A673 (cell line): ENCODE measurements at regions of chr14 and their contacts with region 1.

Region 1: GRCh38 chr14:68911594-68912227 is 67.4 kb downstream of the ACTN1 start:
- DNase-seq: peak; percentile 87
- H3K4me3 ChIP-seq: no peak overlapping the region
- H3K27ac ChIP-seq: no peak overlapping the region
- H3K4me1 ChIP-seq: no peaks in the 10 kb centered on the region
- H3K27me3 ChIP-seq: no peaks in the 10 kb centered on the region
- CTCF ChIP-seq: peak; percentile 99

Region 2: DNA sequence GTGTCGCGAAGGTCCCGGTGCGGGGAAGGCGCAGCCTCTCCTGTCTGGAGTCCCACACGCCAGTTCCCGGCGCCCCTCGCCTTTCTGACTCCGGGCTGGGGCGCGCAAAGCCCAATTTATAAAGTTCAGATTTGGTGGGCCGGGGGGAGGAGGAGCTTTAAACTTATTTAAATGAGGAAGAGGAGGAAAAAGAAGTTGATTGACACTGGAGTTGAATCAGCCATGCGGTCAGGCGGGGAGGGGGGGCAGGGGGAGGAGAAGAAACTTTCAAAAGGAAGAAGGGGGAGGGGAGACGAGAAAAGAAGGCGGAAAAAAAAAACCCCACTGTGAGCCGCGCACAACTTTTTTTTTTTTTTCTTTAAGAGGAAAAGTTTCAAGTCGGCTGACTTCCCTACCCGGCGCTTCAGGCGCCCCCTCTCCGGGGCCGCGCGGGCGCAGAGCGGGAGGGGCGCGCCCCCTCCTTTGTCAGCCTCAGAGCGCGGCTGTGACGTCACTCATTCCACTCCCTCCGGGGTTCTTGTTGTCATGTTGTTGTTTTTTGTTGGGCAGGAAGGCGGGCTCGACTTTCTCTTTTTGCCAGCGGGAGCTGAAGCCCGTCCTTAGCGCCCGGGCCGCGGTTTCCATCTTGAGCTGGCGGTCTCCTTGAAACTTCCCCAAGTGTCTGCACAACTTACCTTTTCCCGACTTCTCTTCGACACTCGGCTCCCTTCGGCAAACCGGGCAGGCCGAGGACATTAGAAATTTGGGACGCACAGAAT is 118.6 kb before region 1 on chr14 and contains the start of gene ZFP36L1:
- CTCF ChIA-PET with region 1: no interaction called
- POLR2A ChIA-PET with region 1: no interaction called
- intact Hi-C with region 1: no loop called
- DNase-seq: peak; percentile 96
- H3K4me3 ChIP-seq: peak within 1 kb of the TSS; percentile 74
- H3K27ac ChIP-seq: peak within 1 kb of the TSS; percentile 97
- H3K4me1 ChIP-seq: peaks cover 36% of the 10 kb centered on the region
- H3K27me3 ChIP-seq: no peaks in the 10 kb centered on the region
- CTCF ChIP-seq: no peak
- total RNA-seq, gene ZFP36L1: 69.5 and 77.1 TPM in 2 replicates

Region 3: DNA sequence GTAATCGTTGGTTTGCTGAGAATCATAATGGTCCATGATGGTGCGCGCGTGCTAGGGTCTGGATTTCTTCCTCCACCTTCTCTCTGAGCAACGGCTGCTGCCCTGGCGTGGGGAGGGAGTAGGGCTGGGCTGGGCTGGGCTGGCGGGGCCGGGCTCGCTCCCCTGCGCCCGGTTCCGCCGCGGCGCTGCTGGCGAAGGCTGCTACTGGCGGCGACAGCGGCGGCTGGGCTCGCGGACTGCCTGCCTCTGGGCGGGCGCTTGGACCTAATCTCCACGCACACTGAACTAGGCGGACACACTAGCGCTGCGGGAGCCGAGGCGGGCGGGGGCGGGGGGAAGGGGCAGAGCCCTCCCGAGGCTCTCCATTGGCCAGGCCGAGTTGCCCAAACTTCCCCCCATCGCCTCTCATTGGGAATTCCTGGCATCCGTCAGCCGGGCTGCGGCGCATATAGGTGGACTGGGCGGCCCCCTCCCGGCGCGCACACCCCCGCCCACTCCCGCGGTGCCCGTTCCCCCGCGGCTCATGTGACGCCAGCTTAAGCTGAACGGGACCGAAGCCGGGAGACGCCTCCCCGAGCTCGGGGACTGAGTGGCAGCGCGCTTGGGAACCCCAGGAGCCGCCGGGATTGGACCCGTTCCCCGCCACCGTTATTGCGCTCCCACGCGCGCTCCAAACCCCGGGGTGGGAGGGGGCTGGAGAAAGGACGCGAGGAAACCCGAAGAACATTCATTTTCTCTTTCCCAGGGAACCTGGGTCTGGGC is 67.5 kb after region 1 on chr14 and contains the start of gene ACTN1:
- CTCF ChIA-PET with region 1: no interaction called
- POLR2A ChIA-PET with region 1: no interaction called
- intact Hi-C with region 1: loop called (anchors 2 kb)
- DNase-seq: peak; percentile 99
- H3K4me3 ChIP-seq: peak within 1 kb of the TSS; percentile 100
- H3K27ac ChIP-seq: peak within 1 kb of the TSS; percentile 96
- H3K4me1 ChIP-seq: peaks cover 13% of the 10 kb centered on the region
- H3K27me3 ChIP-seq: no peaks in the 10 kb centered on the region
- CTCF ChIP-seq: no peak
- total RNA-seq, gene ACTN1: 148 and 163 TPM in 2 replicates

Region 4: DNA sequence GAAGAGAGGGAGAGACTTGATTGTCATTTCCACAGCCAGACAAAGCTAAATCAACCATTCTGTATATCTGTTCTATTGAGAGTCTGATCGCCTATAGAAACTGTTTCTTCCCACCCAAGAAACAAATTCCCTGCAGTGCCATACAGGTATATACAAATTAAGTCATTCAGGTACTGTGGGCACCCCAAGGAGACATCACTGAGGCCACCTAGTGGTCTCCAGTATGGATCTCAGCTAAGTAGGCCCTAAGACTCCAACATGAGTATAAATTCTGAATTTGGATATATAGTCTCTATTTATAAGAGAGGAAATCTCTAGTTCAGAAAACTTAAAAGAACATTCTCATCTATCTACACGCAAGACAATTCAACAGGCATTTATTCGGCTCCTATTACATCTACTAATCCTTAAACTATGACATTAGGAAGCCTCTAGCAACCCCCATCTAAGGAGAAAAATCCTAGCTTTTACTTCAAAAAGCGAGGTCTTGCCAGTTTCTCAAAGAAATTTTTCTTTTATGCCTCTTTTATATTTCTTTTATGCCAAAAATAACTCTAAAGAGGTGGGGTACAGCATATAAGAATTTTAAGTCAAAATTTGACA is 178.6 kb after region 1 on chr14:
- CTCF ChIA-PET with region 1: interaction called, 5 read pairs
- POLR2A ChIA-PET with region 1: no interaction called
- intact Hi-C with region 1: loop called (anchors 1 kb)
- DNase-seq: peak; percentile 19
- H3K4me3 ChIP-seq: no peak overlapping the region
- H3K27ac ChIP-seq: no peak overlapping the region
- H3K4me1 ChIP-seq: peaks cover 4% of the 10 kb centered on the region
- H3K27me3 ChIP-seq: no peaks in the 10 kb centered on the region
- CTCF ChIP-seq: peak; percentile 77

Region 5: GRCh38 chr14:69107407-69108003 is 195.8 kb after region 1 on chr14:
- CTCF ChIA-PET with region 1: interaction called, 4 read pairs
- POLR2A ChIA-PET with region 1: no interaction called
- intact Hi-C with region 1: loop called (anchors 5 kb)
- DNase-seq: peak; percentile 72
- H3K4me3 ChIP-seq: no peak overlapping the region
- H3K27ac ChIP-seq: no peak overlapping the region
- H3K4me1 ChIP-seq: no peaks in the 10 kb centered on the region
- H3K27me3 ChIP-seq: no peaks in the 10 kb centered on the region
- CTCF ChIP-seq: peak; percentile 68

Region 6: GRCh38 chr14:69114763-69115162 is 203.1 kb after region 1 on chr14:
- CTCF ChIA-PET with region 1: no interaction called
- POLR2A ChIA-PET with region 1: interaction called, 18 read pairs
- intact Hi-C with region 1: loop called (anchors 5 kb)
- DNase-seq: no peak
- H3K4me3 ChIP-seq: no peak overlapping the region
- H3K27ac ChIP-seq: no peak overlapping the region
- H3K4me1 ChIP-seq: no peaks in the 10 kb centered on the region
- H3K27me3 ChIP-seq: no peaks in the 10 kb centered on the region
- CTCF ChIP-seq: no peak